GM12878 (cell line): ENCODE measurements at regions of chr7 and their contacts with region 1.

Region 1: DNA sequence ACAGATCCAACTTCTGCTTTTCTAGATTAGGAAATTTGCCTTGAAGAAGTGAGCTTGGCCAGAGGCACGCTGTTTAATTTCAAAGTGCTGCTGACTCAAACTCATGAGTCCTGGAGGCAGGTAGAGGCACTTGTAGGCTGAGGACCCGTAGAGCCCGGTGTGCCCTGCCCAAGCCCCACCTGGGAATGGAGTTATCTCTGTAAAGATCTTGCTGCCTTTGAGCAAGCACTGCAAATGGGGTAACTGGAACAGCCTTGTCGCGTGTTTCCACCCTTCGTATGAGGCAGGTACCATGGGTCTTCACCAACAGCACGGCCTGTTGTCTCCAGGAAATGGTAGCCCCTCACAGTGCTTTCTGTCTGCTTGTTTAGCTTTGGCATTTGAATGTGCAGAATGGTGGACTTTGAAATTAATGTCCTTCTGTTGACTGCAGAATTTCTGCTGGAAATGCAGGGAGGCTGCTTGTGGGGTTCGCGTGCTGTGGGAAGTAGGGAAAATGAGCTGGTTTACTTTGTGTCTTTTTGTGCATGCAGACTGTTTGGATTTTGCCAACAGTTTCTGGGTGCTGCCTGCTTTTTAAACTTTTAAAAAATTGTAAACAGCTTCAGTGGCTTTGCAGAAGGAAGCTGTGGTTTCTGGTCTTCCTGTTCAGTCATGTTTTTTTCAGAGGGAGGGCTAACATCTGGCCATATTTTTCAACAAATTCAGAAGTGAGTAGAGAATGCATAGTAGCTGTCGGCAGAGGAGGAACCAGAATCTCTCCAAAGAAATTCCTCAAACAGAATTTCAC is 27.2 kb downstream of the CCM2 start:
- DNase-seq: peak; percentile 40
- ATAC-seq: peak; percentile 71
- H3K4me3 ChIP-seq: peak overlapping the region; percentile 58
- H3K27ac ChIP-seq: peak overlapping the region; percentile 98
- H3K4me1 ChIP-seq: peaks cover 33% of the 10 kb centered on the region
- H3K27me3 ChIP-seq: no peaks in the 10 kb centered on the region
- CTCF ChIP-seq: no peak
- EP300 ChIP-seq: no peak
- POLR2A ChIP-seq: no peak
- RAD21 ChIP-seq: no peak

Region 2: DNA sequence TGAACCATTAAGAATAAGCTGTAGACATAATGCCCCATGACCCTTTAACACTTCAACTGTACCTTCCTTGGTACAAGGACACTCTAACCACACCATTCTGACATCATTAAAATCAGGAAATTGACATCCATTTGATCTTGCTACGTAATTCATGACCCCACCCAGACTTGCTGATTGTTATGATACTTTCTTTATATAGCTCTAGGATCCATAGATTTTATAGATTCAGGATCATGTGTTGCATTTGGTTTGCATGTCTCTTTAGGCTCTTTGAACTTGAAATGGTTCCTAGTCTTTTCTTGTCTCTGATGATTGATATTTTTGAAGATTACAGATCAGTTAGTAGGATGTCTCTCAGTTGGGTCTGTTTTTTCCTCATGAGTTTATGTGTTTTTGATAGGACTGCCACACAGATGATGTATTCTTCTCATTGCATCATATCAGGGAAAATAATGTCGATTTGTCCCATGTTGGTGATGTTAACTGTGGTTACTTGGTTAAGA is 13.7 kb before region 1 on chr7:
- CTCF ChIA-PET with region 1: interaction called, 6 read pairs
- POLR2A ChIA-PET with region 1: interaction called, 5 read pairs
- RAD21 ChIA-PET with region 1: interaction called, 3 read pairs
- SMC1A ChIA-PET with region 1: interaction called, 15 read pairs
- in situ Hi-C with region 1: no loop called
- intact Hi-C with region 1: no loop called
- DNase-seq: no peak
- ATAC-seq: no peak
- H3K4me3 ChIP-seq: no peak overlapping the region
- H3K27ac ChIP-seq: no peak overlapping the region
- H3K4me1 ChIP-seq: peaks cover 2% of the 10 kb centered on the region
- H3K27me3 ChIP-seq: no peaks in the 10 kb centered on the region
- CTCF ChIP-seq: no peak
- EP300 ChIP-seq: no peak
- POLR2A ChIP-seq: no peak
- RAD21 ChIP-seq: no peak

Region 3: DNA sequence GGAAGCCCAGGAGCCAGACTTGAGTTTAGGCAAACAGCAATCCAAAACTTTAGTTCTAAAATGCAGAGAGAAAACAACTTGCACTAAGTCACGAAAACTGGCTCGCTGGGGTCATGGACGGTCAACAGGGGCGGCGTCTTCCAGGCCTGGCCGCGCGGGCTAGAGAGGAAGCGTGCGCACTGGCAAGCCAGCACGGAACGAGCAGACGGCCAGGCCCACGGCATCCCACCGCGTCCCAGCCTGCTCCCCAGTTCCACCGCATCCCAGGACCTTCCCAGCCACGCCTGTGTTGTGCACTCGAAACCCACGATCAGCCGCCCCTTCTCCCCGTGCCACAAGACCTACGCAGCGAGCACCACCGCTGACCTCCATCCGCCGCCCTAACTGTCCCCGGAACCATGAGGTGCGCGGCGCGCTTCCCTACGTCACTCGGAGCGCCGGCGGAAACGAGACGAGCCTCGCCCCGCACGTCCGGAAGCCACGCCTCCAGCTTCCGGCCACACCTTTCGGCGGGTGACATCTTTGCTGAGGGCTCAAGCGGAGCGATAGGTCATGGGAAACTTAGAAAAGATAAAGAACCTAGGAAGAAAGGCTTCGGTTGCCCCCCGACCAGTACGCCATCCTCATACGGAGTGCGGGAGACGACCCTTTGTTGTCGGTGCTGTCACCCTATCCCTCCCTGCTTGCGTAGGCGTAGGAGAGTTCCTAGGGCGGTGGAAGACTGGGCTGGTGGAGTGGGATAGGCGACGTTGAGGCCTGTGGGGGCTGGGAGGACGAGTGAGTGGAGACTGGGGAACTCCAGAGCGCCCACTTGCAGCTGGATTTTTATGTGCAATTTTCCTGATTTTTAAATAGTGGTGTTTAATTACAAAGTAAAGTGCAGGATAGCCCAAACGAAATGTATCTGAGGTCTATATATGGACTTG is 84.4 kb after region 1 on chr7 and contains the start of gene TBRG4:
- CTCF ChIA-PET with region 1: interaction called, 3 read pairs
- POLR2A ChIA-PET with region 1: interaction called, 5 read pairs
- RAD21 ChIA-PET with region 1: interaction called, 4 read pairs
- SMC1A ChIA-PET with region 1: interaction called, 8 read pairs
- in situ Hi-C with region 1: no loop called
- intact Hi-C with region 1: loop called (anchors 5 kb)
- DNase-seq: peak; percentile 85
- ATAC-seq: peak; percentile 94
- H3K4me3 ChIP-seq: peak within 1 kb of the TSS; percentile 90
- H3K27ac ChIP-seq: peak within 1 kb of the TSS; percentile 83
- H3K4me1 ChIP-seq: peaks cover 7% of the 10 kb centered on the region
- H3K27me3 ChIP-seq: no peaks in the 10 kb centered on the region
- CTCF ChIP-seq: peak; percentile 11 to 22 (median 16); a peak in 4 of 6 replicates
- EP300 ChIP-seq: peak; percentile 12 to 57; a peak in 2 of 4 replicates
- POLR2A ChIP-seq: peak; percentile 100
- RAD21 ChIP-seq: no peak
- polyA plus RNA-seq, gene TBRG4: 8.4 to 13.3 TPM